ENCODE measurements at regions of chr7 and their contacts with region 1.

Region 1: DNA sequence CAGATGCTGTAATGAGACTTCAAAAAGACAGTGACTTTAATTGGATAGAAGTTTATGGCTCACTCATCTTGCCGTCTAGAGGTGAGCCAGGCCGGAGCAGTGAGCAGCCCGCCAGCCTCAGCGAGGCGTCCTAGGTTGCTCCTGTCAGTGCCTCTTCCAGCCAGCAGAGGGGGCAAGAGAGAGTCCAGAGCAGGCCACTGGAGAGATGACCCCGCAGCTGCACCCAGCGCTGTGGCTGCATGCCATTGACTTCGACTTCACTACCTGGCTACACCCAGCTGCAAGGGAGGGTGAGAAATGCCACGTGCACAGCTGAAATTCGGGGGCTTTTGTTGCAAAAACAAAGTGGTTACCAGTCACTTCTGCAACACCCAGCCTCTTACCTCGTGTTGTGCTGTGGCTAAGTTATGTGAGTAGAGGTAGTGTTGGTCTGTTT is 26.5 kb downstream of the NUB1 start:
- DNase-seq: peak; percentile 83
- H3K4me3 ChIP-seq: no peak overlapping the region
- H3K27ac ChIP-seq: no peak overlapping the region
- H3K4me1 ChIP-seq: peaks cover 29% of the 10 kb centered on the region
- H3K27me3 ChIP-seq: no peaks in the 10 kb centered on the region

Region 2: DNA sequence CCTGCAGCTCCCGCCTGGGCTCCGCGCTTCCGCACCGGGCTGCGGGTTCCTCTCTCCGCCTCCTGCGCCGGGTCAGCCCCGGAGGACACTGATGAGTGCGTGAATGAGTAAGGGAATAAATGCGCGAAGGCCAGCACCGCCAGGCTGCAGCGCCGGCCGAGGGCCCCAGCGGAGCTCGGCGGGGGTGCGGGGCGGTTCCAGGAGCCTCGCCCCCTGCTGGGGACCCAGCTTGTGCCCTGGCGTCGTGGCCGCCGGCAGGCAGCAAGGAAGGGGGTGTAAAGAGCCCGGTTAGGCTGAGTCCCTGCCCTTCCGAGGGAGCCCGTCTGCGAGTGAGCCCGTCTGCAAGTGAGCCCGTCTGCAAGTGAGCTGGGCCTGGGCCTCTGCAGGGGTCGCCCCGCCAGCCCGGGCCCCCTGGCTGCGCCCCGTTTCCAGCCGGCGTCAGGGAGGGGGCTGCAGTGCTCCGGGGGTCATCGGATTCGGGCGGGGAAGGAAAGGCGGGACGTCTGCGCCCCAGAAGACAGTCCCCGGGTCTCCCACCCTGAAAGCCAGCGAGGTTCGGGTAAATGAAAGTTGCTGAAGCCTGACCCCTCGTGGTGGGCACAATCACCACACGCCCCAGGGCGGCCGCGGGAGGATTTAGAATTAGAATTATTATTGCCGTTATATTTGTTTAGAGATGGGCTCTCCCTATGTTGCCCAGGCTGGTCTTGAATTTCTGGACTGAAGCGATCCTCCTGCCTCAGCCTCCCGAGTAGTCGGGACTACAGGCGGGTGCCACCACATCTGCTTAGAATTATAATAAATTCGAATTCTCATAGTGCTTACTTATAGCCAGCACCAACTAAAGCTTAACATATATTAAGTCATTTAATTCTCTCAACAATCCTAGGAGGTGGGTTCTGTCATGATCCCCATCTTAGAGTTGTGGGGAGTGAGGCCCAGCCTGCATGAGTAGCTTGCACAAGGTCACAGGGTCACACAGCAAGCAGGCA is 80.4 kb after region 1 on chr7:
- in situ Hi-C with region 1: loop called (anchors 5 kb)
- DNase-seq: peak; percentile 86
- H3K4me3 ChIP-seq: peak overlapping the region; percentile 75
- H3K27ac ChIP-seq: no peak overlapping the region
- H3K4me1 ChIP-seq: no peaks in the 10 kb centered on the region
- H3K27me3 ChIP-seq: no peaks in the 10 kb centered on the region

Region 3: DNA sequence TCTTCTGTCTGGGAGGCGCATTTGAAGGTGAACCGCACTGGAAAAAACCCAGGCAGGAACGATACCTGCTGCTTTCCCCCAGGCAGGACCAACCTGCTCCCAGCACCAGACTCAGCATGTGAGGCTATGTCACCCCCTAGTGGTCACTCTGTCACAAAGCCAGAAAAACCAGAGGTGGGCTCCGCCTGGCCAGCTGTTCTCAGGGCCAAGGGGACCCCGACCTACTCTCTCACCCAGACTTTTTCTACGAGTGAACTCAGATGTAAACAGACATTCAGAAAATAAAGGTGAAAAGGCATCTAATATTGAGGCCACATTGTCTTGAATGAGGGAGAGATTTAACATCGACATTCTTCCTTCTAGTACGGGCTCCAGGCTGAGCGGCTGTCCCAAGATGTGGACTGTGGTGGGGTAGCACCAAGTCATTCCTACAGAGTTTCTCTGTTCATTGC is 391.5 kb after region 1 on chr7:
- in situ Hi-C with region 1: loop called (anchors 25 kb)
- DNase-seq: peak; percentile 75
- H3K4me3 ChIP-seq: no peak overlapping the region
- H3K27ac ChIP-seq: no peak overlapping the region
- H3K4me1 ChIP-seq: peaks cover 20% of the 10 kb centered on the region
- H3K27me3 ChIP-seq: peaks cover 3% of the 10 kb centered on the region

Region 4: DNA sequence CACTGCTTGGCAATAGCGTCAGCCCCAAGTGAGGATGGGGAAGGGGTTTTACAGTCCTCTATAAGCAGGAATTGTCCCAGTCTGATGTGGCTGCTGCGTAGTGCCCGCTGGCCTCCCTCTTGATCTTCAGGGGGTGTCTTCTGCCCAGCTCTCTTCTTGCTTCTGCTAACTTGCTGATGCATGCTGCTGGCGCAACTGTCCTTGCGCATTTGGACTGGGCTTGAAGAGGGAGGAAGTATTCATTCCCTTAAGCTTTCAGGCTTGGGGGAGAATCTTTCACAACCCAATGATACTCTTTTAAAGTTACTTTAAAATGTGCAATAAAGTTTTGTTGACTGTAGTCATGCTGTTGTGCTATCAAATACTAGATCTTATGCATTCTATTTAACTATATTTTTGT is 667.7 kb after region 1 on chr7:
- in situ Hi-C with region 1: no loop called
- DNase-seq: no peak
- H3K4me3 ChIP-seq: no peak overlapping the region
- H3K27ac ChIP-seq: no peak overlapping the region
- H3K4me1 ChIP-seq: no peaks in the 10 kb centered on the region
- H3K27me3 ChIP-seq: no peaks in the 10 kb centered on the region